Caco-2 (cell line): ENCODE measurements at regions of chr3 and their contacts with region 1.

Region 1: DNA sequence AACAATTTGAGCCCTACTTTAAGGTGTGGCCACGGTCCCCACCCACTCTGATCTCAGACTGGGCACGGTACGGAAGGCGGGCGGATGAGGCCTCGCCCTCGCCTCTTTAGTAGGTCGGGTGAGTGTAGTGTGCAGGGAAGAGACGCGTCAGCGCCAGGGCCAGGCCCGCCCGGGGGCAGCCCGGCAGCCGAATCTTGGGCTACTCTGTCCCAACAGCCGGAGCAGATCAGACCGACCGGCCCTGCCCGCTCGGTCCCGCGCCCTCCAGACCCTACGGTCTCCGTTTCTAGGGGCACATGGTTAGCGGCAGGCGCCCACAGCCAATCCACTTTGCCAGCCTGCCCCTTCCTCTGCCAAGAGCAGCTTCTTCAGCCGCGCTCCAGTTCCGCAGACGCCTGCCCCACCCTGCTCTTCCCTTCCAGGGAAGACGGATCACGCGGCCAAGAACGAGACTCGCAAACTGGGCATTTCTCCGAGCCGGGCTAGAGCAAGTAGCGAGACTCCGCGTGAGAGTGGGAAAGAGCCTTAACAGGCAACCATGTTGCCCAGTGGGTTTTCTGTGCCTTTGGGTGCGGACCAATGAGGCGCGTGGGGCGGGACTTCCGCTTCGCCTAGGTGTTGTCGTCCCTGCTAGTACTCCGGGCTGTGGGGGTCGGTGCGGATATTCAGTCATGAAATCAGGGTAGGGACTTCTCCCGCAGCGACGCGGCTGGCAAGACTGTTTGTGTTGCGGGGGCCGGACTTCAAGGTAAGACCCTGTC is at the start of gene RNF13:
- DNase-seq: peak; percentile 92
- H3K4me3 ChIP-seq: peak within 1 kb of the TSS; percentile 91
- H3K4me3 Mint-ChIP-seq: peak within 1 kb of the TSS; percentile 93
- H3K27ac Mint-ChIP-seq: peak within 1 kb of the TSS; percentile 95
- H3K4me1 ChIP-seq: peaks cover 6% of the 10 kb centered on the region
- H3K4me1 Mint-ChIP-seq: peaks cover 8% of the 10 kb centered on the region
- H3K27me3 ChIP-seq: no peaks in the 10 kb centered on the region
- H3K27me3 Mint-ChIP-seq: no peaks in the 10 kb centered on the region
- CTCF ChIP-seq: no peak
- total RNA-seq, gene RNF13: 35.6 and 44.2 TPM in 2 replicates

Region 2: DNA sequence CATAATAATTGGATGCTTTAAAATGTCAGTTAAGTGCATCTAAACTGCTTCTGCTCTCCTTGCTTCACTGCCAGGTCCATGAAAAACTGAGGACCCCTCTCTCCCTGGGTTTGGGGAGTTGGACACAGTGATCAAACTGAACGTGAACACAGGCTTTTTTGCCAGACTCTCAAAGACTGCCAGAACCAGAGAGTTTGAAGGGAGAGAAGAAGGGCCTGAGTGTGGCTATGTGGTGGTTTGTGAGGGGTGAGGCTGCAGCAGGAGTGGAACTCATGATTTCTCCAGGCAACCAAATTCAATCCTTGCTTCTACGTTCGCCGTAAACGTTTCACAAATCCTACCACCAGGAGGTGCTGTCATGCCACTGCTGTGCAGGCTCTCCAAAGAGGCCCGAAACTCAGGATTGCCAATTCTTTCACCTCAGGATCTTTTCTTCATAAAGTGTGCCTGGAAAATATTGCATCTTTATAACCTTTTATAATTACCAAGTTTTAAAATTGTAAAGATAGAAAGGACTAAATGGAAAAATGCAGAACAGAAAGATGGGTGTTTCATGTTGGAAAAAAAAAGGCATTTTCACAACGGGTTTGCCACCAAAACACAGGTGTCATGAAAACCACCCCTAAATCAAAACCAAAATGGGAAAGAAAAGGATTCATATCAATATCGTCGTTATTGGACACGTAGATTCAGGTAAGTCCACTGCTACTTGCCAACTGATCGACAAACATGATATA is 318.6 kb before region 1 on chr3:
- CTCF ChIA-PET with region 1: interaction called, 5 read pairs
- POLR2A ChIA-PET with region 1: no interaction called
- intact Hi-C with region 1: loop called (anchors 2 kb)
- DNase-seq: peak; percentile 53 to 76
- H3K4me3 ChIP-seq: no peak overlapping the region
- H3K4me3 Mint-ChIP-seq: no peak overlapping the region
- H3K27ac Mint-ChIP-seq: no peak overlapping the region
- H3K4me1 ChIP-seq: no peaks in the 10 kb centered on the region
- H3K4me1 Mint-ChIP-seq: no peaks in the 10 kb centered on the region
- H3K27me3 ChIP-seq: no peaks in the 10 kb centered on the region
- H3K27me3 Mint-ChIP-seq: no peaks in the 10 kb centered on the region
- CTCF ChIP-seq: peak; percentile 65 to 71

Region 3: DNA sequence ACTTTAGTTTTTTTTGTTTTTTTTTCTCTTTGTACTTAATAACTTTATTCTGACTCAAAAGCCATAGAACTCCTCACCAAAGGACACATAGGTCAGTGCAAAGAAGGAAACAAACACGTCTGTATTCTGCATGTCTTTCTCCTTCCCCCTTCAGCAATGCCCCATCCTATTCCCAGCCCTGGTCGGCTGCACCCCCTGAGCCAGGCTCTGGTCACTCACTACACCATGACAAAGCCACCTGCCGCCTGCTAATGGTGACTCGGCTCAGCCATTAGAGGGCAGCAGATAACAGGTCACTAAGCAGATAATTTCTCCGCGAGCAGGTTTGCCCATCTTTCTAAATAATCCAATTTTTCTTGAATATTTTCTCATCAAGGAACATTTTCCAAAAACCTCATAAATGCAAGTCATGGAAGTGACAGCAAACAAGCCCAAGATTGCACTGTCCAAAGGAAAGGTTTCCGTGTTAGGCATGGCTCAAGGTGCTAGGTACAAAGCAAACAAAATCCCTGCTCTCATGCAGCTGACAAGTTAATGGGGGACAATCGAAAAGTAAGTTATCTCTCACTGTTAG is 300.5 kb before region 1 on chr3:
- CTCF ChIA-PET with region 1: interaction called, 3 read pairs
- POLR2A ChIA-PET with region 1: no interaction called
- intact Hi-C with region 1: loop called (anchors 2 kb)
- DNase-seq: peak; percentile 70 to 76
- H3K4me3 ChIP-seq: no peak overlapping the region
- H3K4me3 Mint-ChIP-seq: peak overlapping the region; percentile 17
- H3K27ac Mint-ChIP-seq: peak overlapping the region; percentile 22
- H3K4me1 ChIP-seq: peaks cover 23% of the 10 kb centered on the region
- H3K4me1 Mint-ChIP-seq: peaks cover 19% of the 10 kb centered on the region
- H3K27me3 ChIP-seq: no peaks in the 10 kb centered on the region
- H3K27me3 Mint-ChIP-seq: no peaks in the 10 kb centered on the region
- CTCF ChIP-seq: peak; percentile 75 to 86

Region 4: GRCh38 chr3:149670742-149671492 is 141.9 kb before region 1 on chr3:
- CTCF ChIA-PET with region 1: no interaction called
- POLR2A ChIA-PET with region 1: no interaction called
- intact Hi-C with region 1: no loop called
- DNase-seq: peak; percentile 37 to 45
- H3K4me3 ChIP-seq: no peak overlapping the region
- H3K4me3 Mint-ChIP-seq: no peak overlapping the region
- H3K27ac Mint-ChIP-seq: no peak overlapping the region
- H3K4me1 ChIP-seq: 0 out of 2 replicates have a peak, but pooled peaks cover 3% of the 10 kb centered on the region
- H3K4me1 Mint-ChIP-seq: no peaks in the 10 kb centered on the region
- H3K27me3 ChIP-seq: no peaks in the 10 kb centered on the region
- H3K27me3 Mint-ChIP-seq: no peaks in the 10 kb centered on the region
- CTCF ChIP-seq: no peak

Region 5: GRCh38 chr3:149752051-149752787 is 60.6 kb before region 1 on chr3 and contains the start of gene COMMD2:
- CTCF ChIA-PET with region 1: interaction called, 6 read pairs
- POLR2A ChIA-PET with region 1: interaction called, 4 read pairs
- intact Hi-C with region 1: loop called (anchors 5 kb)
- DNase-seq: peak; percentile 86 to 90
- H3K4me3 ChIP-seq: peak within 1 kb of the TSS; percentile 64
- H3K4me3 Mint-ChIP-seq: peak within 1 kb of the TSS; percentile 96
- H3K27ac Mint-ChIP-seq: peak within 1 kb of the TSS; percentile 96
- H3K4me1 ChIP-seq: no peaks in the 10 kb centered on the region
- H3K4me1 Mint-ChIP-seq: no peaks in the 10 kb centered on the region
- H3K27me3 ChIP-seq: no peaks in the 10 kb centered on the region
- H3K27me3 Mint-ChIP-seq: no peaks in the 10 kb centered on the region
- CTCF ChIP-seq: peak; percentile 13 to 36
- total RNA-seq, gene COMMD2: 42.6 and 43.3 TPM in 2 replicates

Region 6: DNA sequence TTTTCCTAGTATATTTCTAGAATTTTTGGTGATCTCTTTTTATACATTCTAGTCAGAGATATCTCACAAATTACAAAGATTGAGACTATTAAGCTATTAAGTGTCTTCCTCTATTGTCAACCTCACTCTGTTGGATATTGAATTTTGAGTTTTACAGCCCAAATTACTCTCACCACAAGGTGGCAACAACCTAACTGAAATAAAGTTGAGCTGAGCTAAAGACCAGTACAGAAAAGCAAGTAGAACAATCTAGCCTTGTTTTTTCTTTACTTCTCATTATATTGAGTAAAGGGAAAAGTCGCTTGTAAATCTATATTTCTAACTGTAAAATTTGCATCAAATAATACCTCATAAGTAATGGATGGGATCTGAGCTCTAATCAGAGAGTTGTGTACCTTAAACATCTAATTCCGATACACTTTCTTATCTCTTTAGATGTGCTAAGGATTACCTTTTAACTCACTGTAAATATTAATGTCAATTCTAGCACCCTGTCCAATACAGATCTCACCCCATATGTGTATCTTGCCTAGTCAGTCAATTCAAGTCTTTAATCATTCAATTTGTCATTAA is 46.9 kb before region 1 on chr3:
- CTCF ChIA-PET with region 1: interaction called, 146 read pairs
- POLR2A ChIA-PET with region 1: no interaction called
- intact Hi-C with region 1: loop called (anchors 1 kb)
- DNase-seq: peak in 1 of 2 experiments; percentile 25
- H3K4me3 ChIP-seq: no peak overlapping the region
- H3K4me3 Mint-ChIP-seq: no peak overlapping the region
- H3K27ac Mint-ChIP-seq: no peak overlapping the region
- H3K4me1 ChIP-seq: peaks cover 11% of the 10 kb centered on the region
- H3K4me1 Mint-ChIP-seq: no peaks in the 10 kb centered on the region
- H3K27me3 ChIP-seq: no peaks in the 10 kb centered on the region; the same call in 1 of the 2 replicates
- H3K27me3 Mint-ChIP-seq: peaks cover 3% of the 10 kb centered on the region
- CTCF ChIP-seq: peak; percentile 40 to 74

Region 7: DNA sequence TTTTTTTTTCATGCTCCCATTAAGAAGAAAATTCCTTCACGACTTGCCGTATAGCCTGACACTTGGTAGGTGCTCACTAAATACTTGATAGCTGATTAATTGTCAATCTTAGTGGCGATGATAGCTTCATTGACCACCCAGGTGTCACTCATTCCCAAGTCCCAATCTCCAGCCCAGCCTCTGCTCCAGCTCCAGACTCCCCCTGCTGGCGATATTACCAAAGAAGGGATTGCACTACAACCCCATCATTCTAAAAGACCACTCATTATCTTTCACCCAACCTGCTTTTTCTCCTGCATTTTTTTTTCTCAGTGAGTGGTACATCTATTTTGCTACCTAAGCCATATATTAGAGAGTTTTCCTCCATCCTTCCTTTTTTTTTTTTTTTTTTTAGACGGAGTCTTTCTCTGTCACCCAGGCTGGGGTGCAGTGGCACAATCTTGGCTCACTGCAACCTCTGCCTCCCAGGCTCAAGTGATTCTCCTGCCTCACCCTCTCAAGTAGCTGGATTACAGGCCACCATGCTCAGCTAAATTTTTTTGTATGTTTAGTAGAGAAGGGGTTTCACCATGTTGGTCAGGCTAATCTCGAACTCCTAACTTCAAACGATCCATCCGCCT is 41.0 kb before region 1 on chr3:
- CTCF ChIA-PET with region 1: interaction called, 146 read pairs
- POLR2A ChIA-PET with region 1: no interaction called
- intact Hi-C with region 1: no loop called
- DNase-seq: peak; percentile 45 to 70
- H3K4me3 ChIP-seq: no peak overlapping the region
- H3K4me3 Mint-ChIP-seq: no peak overlapping the region
- H3K27ac Mint-ChIP-seq: no peak overlapping the region
- H3K4me1 ChIP-seq: peaks cover 11% of the 10 kb centered on the region; the same call in 1 of the 2 replicates
- H3K4me1 Mint-ChIP-seq: peaks cover 14% of the 10 kb centered on the region
- H3K27me3 ChIP-seq: no peaks in the 10 kb centered on the region
- H3K27me3 Mint-ChIP-seq: no peaks in the 10 kb centered on the region
- CTCF ChIP-seq: peak; percentile 83 to 84

Region 8: DNA sequence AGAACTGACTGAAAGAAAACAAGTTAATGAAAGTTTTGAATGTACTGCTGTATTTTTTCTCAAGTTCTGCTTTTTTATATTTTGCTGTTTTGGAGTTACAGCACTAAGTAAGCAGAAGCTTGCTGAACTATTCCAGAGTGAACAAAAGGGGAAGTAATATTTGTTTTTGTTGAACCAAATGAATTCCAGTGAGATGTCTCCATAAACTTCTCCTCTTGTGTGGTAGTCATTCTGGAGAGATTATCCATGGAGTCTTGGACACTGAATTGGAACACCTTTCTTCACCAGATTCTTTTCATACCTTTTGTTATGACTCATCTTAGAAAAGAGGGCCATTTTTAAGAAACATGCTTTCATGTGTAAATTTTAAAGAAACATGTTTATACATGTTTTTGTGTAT is 29.2 kb before region 1 on chr3:
- CTCF ChIA-PET with region 1: no interaction called
- POLR2A ChIA-PET with region 1: interaction called, 15 read pairs
- intact Hi-C with region 1: no loop called
- DNase-seq: no peak
- H3K4me3 ChIP-seq: no peak overlapping the region
- H3K4me3 Mint-ChIP-seq: peak overlapping the region; percentile 36
- H3K27ac Mint-ChIP-seq: peak overlapping the region; percentile 91
- H3K4me1 ChIP-seq: peaks cover 20% of the 10 kb centered on the region
- H3K4me1 Mint-ChIP-seq: peaks cover 24% of the 10 kb centered on the region
- H3K27me3 ChIP-seq: no peaks in the 10 kb centered on the region
- H3K27me3 Mint-ChIP-seq: no peaks in the 10 kb centered on the region
- CTCF ChIP-seq: no peak